ENCODE measurements at regions of chr7 and their contacts with region 1.

Region 1: DNA sequence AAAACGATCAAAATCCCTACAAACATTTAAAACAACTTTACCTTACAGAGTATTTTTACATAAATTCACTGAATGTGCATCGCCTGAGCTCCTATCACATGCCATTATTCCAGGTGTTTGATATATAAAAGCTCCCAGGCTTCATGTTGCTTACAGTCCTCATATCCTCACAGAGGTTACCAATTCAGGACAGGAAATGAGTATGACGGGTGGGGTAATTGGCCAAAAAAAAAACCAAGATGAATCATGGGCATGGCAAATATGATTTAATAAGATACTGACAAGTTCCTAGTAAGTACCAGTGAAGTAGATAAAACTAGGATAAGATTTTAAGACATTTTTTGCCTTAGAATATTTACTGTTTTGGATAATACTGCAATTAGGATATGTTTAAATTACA is 135.8 kb downstream of the KMT2E start:
- DNase-seq: no peak
- H3K4me3 ChIP-seq: no peak overlapping the region
- H3K27ac ChIP-seq: no peak overlapping the region
- H3K4me1 ChIP-seq: no peaks in the 10 kb centered on the region
- CTCF ChIP-seq: no peak

Region 2: DNA sequence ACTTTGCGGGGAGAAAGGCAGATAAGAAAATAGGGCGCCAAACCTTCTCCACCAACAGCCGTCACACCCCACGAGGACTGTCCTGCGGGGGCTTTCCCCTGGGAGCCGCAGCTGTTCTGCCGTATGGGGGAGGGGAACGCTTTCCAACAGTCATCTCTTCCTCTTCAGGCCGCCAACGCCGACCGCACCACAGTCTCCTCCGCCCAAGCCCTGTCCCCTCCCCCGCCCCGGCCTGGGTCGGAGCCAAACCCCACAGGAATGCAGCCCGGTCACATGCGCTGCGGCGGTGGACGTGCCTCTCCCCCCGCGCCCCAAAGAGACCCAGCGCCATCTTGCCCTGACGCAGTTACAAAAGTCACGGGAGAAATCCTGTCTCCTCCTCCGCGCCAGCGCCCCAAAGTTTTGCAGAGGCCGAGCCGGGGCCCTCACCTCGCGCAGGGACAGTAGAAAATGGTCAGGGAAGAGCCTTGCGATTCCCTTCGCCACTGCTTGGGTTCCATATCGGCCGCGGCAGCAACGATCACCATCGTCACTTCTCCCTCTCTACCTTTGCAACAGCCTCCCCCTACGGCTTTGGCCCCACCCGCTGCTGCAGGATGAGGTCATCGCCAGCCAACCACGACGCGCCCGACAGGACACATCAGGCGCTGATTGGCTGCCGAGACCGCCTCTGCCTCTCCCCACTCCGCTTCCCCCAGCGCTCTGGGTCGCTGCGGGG is 137.2 kb before region 1 on chr7:
- CTCF ChIA-PET with region 1: no interaction called
- POLR2A ChIA-PET with region 1: no interaction called
- intact Hi-C with region 1: no loop called
- DNase-seq: peak; percentile 98
- H3K4me3 ChIP-seq: peak overlapping the region; percentile 90
- H3K27ac ChIP-seq: peak overlapping the region; percentile 96
- H3K4me1 ChIP-seq: peaks cover 43% of the 10 kb centered on the region
- CTCF ChIP-seq: no peak

Region 3: GRCh38 chr7:105304040-105304895 is 154.4 kb after region 1 on chr7:
- CTCF ChIA-PET with region 1: no interaction called
- POLR2A ChIA-PET with region 1: no interaction called
- intact Hi-C with region 1: no loop called
- DNase-seq: no peak
- H3K4me3 ChIP-seq: no peak overlapping the region
- H3K27ac ChIP-seq: no peak overlapping the region
- H3K4me1 ChIP-seq: no peaks in the 10 kb centered on the region
- CTCF ChIP-seq: no peak

Region 4: GRCh38 chr7:105336009-105336408 is 186.2 kb after region 1 on chr7:
- CTCF ChIA-PET with region 1: no interaction called
- POLR2A ChIA-PET with region 1: no interaction called
- intact Hi-C with region 1: loop called (anchors 5 kb)
- DNase-seq: peak; percentile 10
- H3K4me3 ChIP-seq: no peak overlapping the region
- H3K27ac ChIP-seq: no peak overlapping the region
- H3K4me1 ChIP-seq: no peaks in the 10 kb centered on the region
- CTCF ChIP-seq: peak; percentile 76

Region 5: GRCh38 chr7:105589356-105590077 is 439.7 kb after region 1 on chr7:
- CTCF ChIA-PET with region 1: no interaction called
- POLR2A ChIA-PET with region 1: no interaction called
- intact Hi-C with region 1: loop called (anchors 10 kb)
- DNase-seq: peak; percentile 78
- H3K4me3 ChIP-seq: no peak overlapping the region
- H3K27ac ChIP-seq: no peak overlapping the region
- H3K4me1 ChIP-seq: peaks cover 6% of the 10 kb centered on the region
- CTCF ChIP-seq: peak; percentile 90

Measured in OCI-LY7 (cell line).